ENCODE measurements at regions of chr14 and their contacts with region 1.

Region 1: DNA sequence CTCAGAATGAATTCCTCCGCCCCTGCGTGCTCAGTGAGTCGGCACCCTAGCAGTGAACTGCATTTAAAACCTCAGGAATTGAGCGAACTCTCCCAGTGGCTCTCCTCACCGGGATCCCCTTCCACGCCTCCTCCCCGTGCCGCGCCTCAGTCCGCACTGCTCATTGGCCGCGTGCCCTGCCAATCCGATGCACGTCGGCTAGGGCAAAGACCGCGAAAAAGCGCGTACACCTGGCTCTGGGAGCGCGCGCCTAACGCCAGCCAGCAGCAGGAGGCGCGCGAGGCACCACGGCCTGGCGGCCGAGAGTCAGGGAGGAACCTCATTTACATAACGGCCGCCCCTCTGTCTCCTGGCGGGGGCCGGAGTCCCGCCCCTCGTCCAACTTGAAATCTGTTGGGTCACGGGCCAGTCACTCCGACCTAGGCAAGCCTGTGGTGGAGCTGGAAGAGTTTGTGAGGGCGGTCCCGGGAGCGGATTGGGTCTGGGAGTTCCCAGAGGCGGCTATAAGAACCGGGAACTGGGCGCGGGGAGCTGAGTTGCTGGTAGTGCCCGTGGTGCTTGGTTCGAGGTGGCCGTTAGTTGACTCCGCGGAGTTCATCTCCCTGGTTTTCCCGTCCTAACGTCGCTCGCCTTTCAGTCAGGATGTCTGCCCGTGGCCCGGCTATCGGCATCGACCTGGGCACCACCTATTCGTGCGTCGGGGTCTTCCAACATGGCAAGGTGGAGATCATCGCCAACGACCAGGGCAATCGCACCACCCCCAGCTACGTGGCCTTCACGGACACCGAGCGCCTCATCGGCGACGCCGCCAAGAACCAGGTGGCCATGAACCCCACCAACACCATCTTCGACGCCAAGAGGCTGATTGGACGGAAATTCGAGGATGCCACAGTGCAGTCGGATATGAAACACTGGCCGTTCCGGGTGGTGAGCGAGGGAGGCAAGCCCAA is at the start of gene HSPA2:
- DNase-seq: peak; percentile 97 to 100
- ATAC-seq: peak; percentile 95 to 96
- H3K4me3 ChIP-seq: peak within 1 kb of the TSS; percentile 62
- H3K27ac ChIP-seq: peak within 1 kb of the TSS; percentile 95 to 96
- H3K4me1 ChIP-seq: peaks cover 33% of the 10 kb centered on the region; the same call in 2 of the 3 replicates
- CTCF ChIP-seq: peak; percentile 80
- EP300 ChIP-seq: no peak
- POLR2A ChIP-seq: peak; percentile 100
- RAD21 ChIP-seq: peak; percentile 76 to 88
- polyA plus RNA-seq, gene HSPA2: 50.0 and 59.9 TPM in 2 replicates

Region 2: GRCh38 chr14:64117671-64118402 is 422.6 kb before region 1 on chr14:
- CTCF ChIA-PET with region 1: no interaction called
- POLR2A ChIA-PET with region 1: no interaction called
- DNase-seq: peak in 1 of 2 experiments; percentile 19
- ATAC-seq: no peak
- H3K4me3 ChIP-seq: no peak overlapping the region
- H3K27ac ChIP-seq: no peak overlapping the region
- H3K4me1 ChIP-seq: no peaks in the 10 kb centered on the region
- CTCF ChIP-seq: no peak
- EP300 ChIP-seq: no peak
- POLR2A ChIP-seq: no peak
- RAD21 ChIP-seq: no peak

Region 3: DNA sequence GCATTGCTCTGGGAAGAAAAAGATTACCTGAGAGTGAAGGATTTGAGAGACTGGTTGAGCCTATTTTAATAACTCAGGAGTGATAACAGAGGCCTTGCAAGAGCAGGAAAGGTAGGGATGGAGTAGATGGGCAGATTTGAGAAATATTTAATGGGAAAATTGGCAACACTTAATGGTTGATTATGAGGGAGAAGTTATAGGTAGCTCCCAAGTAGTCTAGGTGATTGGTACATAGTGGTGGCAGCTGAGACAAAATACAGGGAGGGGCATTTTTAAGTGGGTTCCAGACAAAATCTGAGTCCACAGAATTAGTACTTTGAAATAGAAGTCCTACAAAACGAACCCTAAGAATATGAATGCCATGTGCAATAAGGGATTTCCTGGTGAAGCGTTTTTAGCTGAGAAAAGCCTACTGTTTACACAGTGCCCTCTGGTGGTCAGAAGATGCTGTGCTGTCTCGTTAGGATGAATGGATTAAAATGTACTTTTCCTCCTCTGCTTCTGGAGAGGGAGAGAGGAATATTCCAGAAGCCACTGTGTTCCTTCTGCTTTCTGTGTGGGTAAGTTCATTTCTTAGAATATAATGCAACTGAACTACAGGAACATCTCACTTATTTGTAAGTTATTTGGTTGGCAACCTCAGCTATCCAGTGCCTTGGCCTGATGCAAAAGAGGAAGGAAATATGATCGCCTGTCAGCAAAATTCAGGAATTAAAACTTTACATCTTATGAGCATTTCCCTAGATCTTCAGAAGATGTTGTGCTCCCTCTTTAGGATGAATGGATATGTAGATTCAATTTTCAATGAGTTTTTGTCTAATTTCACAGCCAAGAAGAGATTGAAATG is 29.4 kb before region 1 on chr14:
- CTCF ChIA-PET with region 1: interaction called, 29 read pairs
- POLR2A ChIA-PET with region 1: interaction called, 9 read pairs
- DNase-seq: peak; percentile 32 to 76
- ATAC-seq: peak; percentile 81 to 83; a peak in 5 of 6 replicates
- H3K4me3 ChIP-seq: no peak overlapping the region
- H3K27ac ChIP-seq: peak overlapping the region; percentile 34 to 71
- H3K4me1 ChIP-seq: peaks cover 75% of the 10 kb centered on the region
- CTCF ChIP-seq: peak; percentile 96
- EP300 ChIP-seq: no peak
- POLR2A ChIP-seq: no peak
- RAD21 ChIP-seq: peak; percentile 53

Region 4: DNA sequence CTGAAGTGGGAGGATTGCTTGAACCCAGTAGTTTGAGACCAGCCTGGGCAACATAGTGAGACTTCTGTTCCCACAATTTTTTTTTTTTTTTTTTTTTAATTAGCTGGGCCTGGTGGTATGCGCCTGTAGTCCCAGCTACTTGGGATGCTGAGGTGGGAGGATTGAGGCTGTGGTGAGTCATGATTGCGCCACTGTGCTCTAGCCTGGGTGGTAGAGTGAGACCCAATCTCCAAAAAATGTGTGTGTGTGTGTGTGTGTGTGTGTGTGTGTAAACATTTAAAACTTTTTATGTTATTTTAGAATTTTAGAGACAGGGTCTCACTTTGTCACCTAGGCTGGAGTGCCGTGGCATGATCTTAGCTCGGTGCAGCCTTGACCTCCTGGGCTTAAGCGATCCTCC is 16.0 kb after region 1 on chr14:
- CTCF ChIA-PET with region 1: interaction called, 14 read pairs
- POLR2A ChIA-PET with region 1: interaction called, 29 read pairs
- DNase-seq: peak in 1 of 2 experiments; percentile 44
- ATAC-seq: peak; percentile 50 to 52; a peak in 2 of 6 replicates
- H3K4me3 ChIP-seq: no peak overlapping the region
- H3K27ac ChIP-seq: peak overlapping the region in 1 of 2 experiments; percentile 50; a peak in 1 of 6 replicates
- H3K4me1 ChIP-seq: peaks cover 2% of the 10 kb centered on the region; the same call in 1 of the 3 replicates
- CTCF ChIP-seq: no peak
- EP300 ChIP-seq: no peak
- POLR2A ChIP-seq: no peak
- RAD21 ChIP-seq: no peak

Region 5: DNA sequence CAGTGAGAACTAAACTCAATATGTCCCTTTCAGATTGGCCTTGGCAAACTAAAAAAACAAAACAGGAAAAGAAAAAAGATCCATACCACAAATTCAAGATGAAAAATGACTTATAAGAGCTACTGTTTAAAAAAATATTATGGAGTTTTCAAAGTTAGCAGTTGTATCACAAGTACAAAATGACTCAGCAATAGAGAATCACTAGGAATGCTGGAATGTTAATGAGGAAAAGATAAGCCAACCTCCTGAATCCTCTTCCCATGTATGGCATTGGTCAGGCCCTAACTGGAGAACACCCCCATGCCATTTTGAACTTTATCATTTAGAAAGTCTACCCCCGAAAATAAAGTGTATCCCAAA is 71.5 kb after region 1 on chr14:
- CTCF ChIA-PET with region 1: interaction called, 12 read pairs
- POLR2A ChIA-PET with region 1: interaction called, 15 read pairs
- DNase-seq: peak; percentile 47 to 67
- ATAC-seq: peak in 1 of 2 experiments; percentile 81; a peak in 3 of 6 replicates
- H3K4me3 ChIP-seq: no peak overlapping the region
- H3K27ac ChIP-seq: peak overlapping the region; percentile 46 to 76
- H3K4me1 ChIP-seq: peaks cover 23% of the 10 kb centered on the region
- CTCF ChIP-seq: no peak
- EP300 ChIP-seq: no peak
- POLR2A ChIP-seq: no peak
- RAD21 ChIP-seq: no peak

Region 6: DNA sequence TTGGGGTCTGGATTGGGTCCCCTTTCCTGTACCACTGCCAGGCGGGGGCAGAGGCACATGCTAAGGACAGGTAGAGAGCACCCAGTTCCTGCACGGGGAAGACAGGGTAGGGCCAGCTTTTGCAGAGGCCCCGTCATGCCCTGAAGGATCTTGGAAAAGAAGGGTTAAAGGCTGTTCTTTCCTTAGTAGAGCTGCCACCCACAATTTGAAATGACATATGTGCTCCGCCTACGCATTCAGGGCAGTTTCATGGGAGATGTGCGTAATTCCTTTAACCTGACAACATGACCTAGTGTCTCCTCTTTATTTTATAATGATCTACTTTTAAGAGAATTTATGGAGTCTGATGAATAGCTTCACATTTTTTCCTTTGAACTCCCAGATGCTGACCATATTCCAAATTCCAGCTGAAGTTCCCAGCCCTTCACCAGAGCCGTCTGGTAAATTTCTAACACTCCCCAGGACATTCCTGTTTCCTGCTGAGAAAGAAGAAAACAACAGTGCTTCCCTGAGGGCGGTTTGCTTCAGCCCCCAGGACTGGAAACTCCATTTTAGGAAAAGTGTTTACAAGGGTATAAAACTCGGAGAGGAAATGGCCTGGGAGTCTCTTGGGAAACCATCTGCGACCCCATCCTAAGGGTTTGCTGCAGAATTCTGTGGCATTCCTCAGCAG is 104.9 kb after region 1 on chr14:
- CTCF ChIA-PET with region 1: interaction called, 182 read pairs
- POLR2A ChIA-PET with region 1: interaction called, 24 read pairs
- DNase-seq: peak in 1 of 2 experiments; percentile 94
- ATAC-seq: peak; percentile 78 to 80
- H3K4me3 ChIP-seq: no peak overlapping the region
- H3K27ac ChIP-seq: peak overlapping the region; percentile 79 to 93
- H3K4me1 ChIP-seq: peaks cover 61% of the 10 kb centered on the region
- CTCF ChIP-seq: no peak
- EP300 ChIP-seq: peak; percentile 91 to 98
- POLR2A ChIP-seq: no peak
- RAD21 ChIP-seq: peak in 1 of 2 experiments; percentile 37; a peak in 2 of 5 replicates

Region 7: DNA sequence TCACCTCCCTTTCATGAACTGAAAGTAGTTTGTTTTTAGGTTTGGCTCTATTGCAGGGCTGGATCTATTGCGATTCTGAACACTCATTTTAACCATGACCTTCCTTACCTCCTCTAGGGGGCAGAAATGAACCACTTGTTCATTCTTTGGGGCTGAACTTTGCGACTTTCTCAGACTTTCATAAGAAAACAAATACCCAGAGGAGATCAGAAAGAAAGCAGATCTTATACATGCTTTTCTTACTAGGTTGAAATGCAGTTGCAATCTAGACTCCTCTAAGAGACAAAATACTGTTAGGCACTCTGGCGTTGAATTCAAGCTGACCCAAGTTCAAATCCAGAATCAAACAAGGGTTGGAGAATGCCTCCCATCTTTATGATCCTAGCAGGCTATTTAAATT is 131.1 kb after region 1 on chr14:
- CTCF ChIA-PET with region 1: interaction called, 7 read pairs
- POLR2A ChIA-PET with region 1: interaction called, 17 read pairs
- DNase-seq: peak; percentile 72 to 80
- ATAC-seq: peak; percentile 74 to 87; a peak in 5 of 6 replicates
- H3K4me3 ChIP-seq: no peak overlapping the region
- H3K27ac ChIP-seq: peak overlapping the region; percentile 75 to 79
- H3K4me1 ChIP-seq: peaks cover 37% of the 10 kb centered on the region
- CTCF ChIP-seq: peak; percentile 87
- EP300 ChIP-seq: no peak
- POLR2A ChIP-seq: no peak
- RAD21 ChIP-seq: peak; percentile 94

Measured in A549 (cell line).